OCI-LY7 (cell line): ENCODE measurements at regions of chr19 and their contacts with region 1.

Region 1: GRCh38 chr19:16714702-16715287 is 4.9 kb upstream of the NWD1 start:
- DNase-seq: peak; percentile 66
- H3K4me3 ChIP-seq: no peak overlapping the region
- H3K27ac ChIP-seq: no peak overlapping the region
- H3K4me1 ChIP-seq: peaks cover 40% of the 10 kb centered on the region
- CTCF ChIP-seq: peak; percentile 99

Region 2: GRCh38 chr19:16608290-16608739 is 106.5 kb before region 1 on chr19:
- CTCF ChIA-PET with region 1: no interaction called
- POLR2A ChIA-PET with region 1: no interaction called
- intact Hi-C with region 1: no loop called
- DNase-seq: no peak
- H3K4me3 ChIP-seq: no peak overlapping the region
- H3K27ac ChIP-seq: peak overlapping the region; percentile 15
- H3K4me1 ChIP-seq: peaks cover 64% of the 10 kb centered on the region
- CTCF ChIP-seq: no peak

Region 3: DNA sequence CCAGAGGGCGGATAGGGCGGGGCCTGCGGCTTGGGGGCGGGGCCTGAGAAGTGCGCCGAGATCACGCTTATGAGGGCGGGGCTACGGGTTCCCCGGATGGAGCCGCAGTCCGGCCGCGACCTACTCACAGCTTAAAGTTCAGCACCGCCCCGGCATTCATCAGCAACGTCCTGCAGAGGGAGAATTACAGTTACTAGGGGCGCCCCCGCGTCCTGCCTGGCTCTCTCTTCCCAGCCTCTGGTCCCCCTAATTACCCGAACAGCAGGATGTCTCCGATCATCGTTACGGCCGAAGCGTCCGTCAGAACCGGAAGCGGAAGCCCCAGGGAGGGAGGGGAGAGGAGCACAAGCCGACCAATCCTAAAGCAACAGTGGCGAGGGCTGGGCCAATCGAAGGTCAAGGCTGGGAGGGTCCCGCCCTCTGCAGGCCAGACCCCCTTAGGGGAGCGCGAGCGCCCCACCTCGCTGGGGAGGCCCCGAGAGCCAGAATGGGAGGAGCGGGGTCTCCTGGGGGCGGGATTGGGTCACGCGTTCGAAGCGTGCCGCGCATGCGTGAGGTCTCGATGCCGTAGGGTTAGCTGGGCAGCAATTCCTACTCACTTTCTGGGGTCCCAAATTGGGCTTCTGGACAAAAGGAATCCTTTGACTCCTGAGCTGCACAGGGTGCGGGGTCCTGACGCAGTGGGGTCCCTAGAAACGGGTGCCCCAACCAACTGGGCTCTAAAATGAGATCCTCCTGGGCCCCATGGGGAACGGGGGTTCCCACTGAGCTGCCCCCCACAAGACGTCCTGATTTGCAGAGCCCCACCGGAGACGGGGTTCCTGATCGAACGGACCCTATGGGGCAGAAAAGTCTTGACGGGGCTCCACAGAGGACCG is 54.7 kb before region 1 on chr19 and contains the start of gene SMIM7:
- CTCF ChIA-PET with region 1: no interaction called
- POLR2A ChIA-PET with region 1: interaction called, 3 read pairs
- intact Hi-C with region 1: loop called (anchors 5 kb)
- DNase-seq: peak; percentile 100
- H3K4me3 ChIP-seq: peak within 1 kb of the TSS; percentile 96
- H3K27ac ChIP-seq: peak within 1 kb of the TSS; percentile 83
- H3K4me1 ChIP-seq: peaks cover 29% of the 10 kb centered on the region
- CTCF ChIP-seq: peak; percentile 66
- total RNA-seq, gene SMIM7: 75.5 and 87.0 TPM in 2 replicates

Region 4: GRCh38 chr19:16771618-16772017 is 56.8 kb after region 1 on chr19:
- CTCF ChIA-PET with region 1: no interaction called
- POLR2A ChIA-PET with region 1: no interaction called
- intact Hi-C with region 1: loop called (anchors 2 kb)
- DNase-seq: peak; percentile 80
- H3K4me3 ChIP-seq: no peak overlapping the region
- H3K27ac ChIP-seq: no peak overlapping the region
- H3K4me1 ChIP-seq: no peaks in the 10 kb centered on the region
- CTCF ChIP-seq: peak; percentile 88

Region 5: GRCh38 chr19:16778796-16779411 is 64.1 kb after region 1 on chr19:
- CTCF ChIA-PET with region 1: no interaction called
- POLR2A ChIA-PET with region 1: interaction called, 3 read pairs
- intact Hi-C with region 1: loop called (anchors 2 kb)
- DNase-seq: peak; percentile 78
- H3K4me3 ChIP-seq: no peak overlapping the region
- H3K27ac ChIP-seq: no peak overlapping the region
- H3K4me1 ChIP-seq: no peaks in the 10 kb centered on the region
- CTCF ChIP-seq: peak; percentile 85

Region 6: GRCh38 chr19:16897154-16897855 is 182.5 kb after region 1 on chr19:
- CTCF ChIA-PET with region 1: interaction called, 4 read pairs
- POLR2A ChIA-PET with region 1: no interaction called
- intact Hi-C with region 1: loop called (anchors 2 kb)
- DNase-seq: peak; percentile 83
- H3K4me3 ChIP-seq: peak overlapping the region; percentile 75
- H3K27ac ChIP-seq: no peak overlapping the region
- H3K4me1 ChIP-seq: peaks cover 32% of the 10 kb centered on the region
- CTCF ChIP-seq: no peak

Region 7: DNA sequence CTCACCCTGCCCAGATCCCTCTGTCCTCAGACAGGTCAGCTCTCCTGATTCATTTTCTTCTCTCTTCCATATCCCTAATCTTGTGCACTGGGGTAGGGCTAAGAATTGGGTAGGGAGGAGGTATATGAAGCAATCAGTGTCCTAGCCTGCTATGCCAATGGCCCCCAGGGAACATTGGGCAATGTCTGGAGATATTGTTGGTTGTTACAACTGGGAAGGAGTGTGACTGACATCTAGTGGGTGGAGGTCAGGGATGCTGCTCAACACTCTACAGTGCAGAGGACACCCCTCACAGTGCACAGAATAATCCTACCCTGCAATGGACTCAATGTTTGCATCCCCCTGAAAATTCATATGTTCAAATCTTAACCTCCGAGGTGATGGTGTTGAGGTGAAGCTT is 254.3 kb after region 1 on chr19:
- CTCF ChIA-PET with region 1: no interaction called
- POLR2A ChIA-PET with region 1: no interaction called
- intact Hi-C with region 1: loop called (anchors 2 kb)
- DNase-seq: peak; percentile 57
- H3K4me3 ChIP-seq: no peak overlapping the region
- H3K27ac ChIP-seq: no peak overlapping the region
- H3K4me1 ChIP-seq: no peaks in the 10 kb centered on the region
- CTCF ChIP-seq: peak; percentile 77